ENCODE measurements at regions of chr3 and their contacts with region 1.

Region 1: GRCh38 chr3:57060089-57060829 is at the start of gene SPATA12:
- DNase-seq: peak; percentile 94 to 97
- H3K4me3 ChIP-seq: peak within 1 kb of the TSS; percentile 12; the same call in 1 of the 2 replicates
- H3K27ac ChIP-seq: peak within 1 kb of the TSS; percentile 96
- H3K4me1 ChIP-seq: peaks cover 45% of the 10 kb centered on the region
- H3K27me3 ChIP-seq: no peaks in the 10 kb centered on the region
- CTCF ChIP-seq: no peak
- total RNA-seq, gene SPATA12: 0.43 and 0.57 TPM in 2 replicates

Region 2: GRCh38 chr3:57078344-57078634 is 18.0 kb after region 1 on chr3:
- CTCF ChIA-PET with region 1: interaction called, 9 read pairs
- POLR2A ChIA-PET with region 1: no interaction called
- intact Hi-C with region 1: loop called (anchors 1 kb)
- DNase-seq: no peak
- H3K4me3 ChIP-seq: peak overlapping the region; percentile 95
- H3K27ac ChIP-seq: peak overlapping the region; percentile 89
- H3K4me1 ChIP-seq: peaks cover 30% of the 10 kb centered on the region
- H3K27me3 ChIP-seq: no peaks in the 10 kb centered on the region
- CTCF ChIP-seq: no peak